A549 (cell line): ENCODE measurements at regions of chr9 and their contacts with region 1.

Region 1: DNA sequence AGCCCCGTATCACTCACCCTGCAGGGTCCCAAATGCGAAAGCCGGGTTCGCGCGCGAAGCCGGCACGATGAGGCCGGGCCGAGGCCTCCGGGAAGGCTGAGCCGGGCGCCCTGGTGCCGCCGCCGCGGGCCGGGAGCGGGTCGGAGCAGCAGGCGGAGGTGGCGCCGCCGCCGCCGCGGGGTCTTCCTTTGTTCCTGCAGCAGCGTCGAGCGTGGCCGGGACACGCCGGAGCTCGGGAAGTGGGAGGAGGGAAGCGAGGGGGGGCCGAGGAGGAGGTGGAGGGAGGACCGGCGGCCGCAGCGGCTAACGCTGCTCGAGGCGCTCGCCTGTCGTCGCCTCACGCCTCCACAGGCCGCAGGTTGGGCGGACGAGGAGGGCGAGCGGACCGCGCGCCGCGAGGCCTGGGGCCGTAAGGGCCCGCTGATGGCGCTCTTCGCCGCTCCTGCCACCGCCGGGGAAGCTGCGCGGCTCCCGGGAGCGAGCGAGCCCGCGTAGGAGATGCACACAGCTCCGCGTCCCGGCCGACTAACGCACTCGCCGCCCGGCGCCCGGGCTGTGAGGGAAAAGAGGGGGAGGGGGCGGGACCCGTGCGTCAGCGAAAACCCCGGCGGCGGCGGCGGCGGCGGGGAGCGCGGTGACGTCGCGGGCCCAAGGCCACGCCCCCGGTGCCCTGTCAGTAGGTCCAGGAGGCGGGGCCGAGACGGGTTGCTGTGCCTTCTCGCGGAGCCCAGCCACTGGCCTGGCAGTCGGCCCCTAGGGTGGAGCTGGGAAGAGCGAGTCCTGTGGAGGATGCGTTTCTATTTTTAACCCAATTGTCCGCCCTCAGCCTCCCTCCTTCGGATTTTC is at the start of gene ZFAND5:
- DNase-seq: peak; percentile 94 to 98
- ATAC-seq: peak; percentile 82 to 89
- H3K4me3 ChIP-seq: peak within 1 kb of the TSS; percentile 91
- H3K27ac ChIP-seq: peak within 1 kb of the TSS; percentile 99
- H3K4me1 ChIP-seq: peaks cover 26% of the 10 kb centered on the region
- CTCF ChIP-seq: peak; percentile 21; the same call in 1 of the 3 replicates
- EP300 ChIP-seq: peak in 1 of 2 experiments; percentile 38; a peak in 2 of 5 replicates
- POLR2A ChIP-seq: peak; percentile 95
- RAD21 ChIP-seq: peak; percentile 26 to 68; a peak in 4 of 5 replicates
- polyA plus RNA-seq, gene ZFAND5: 234 and 315 TPM in 2 replicates

Region 2: GRCh38 chr9:72315510-72316311 is 49.2 kb before region 1 on chr9:
- CTCF ChIA-PET with region 1: interaction called, 4 read pairs
- POLR2A ChIA-PET with region 1: interaction called, 48 read pairs
- DNase-seq: peak; percentile 40 to 91
- ATAC-seq: peak; percentile 87 to 91
- H3K4me3 ChIP-seq: peak overlapping the region; percentile 22; the same call in 2 of the 3 replicates
- H3K27ac ChIP-seq: peak overlapping the region; percentile 87 to 90
- H3K4me1 ChIP-seq: peaks cover 51% of the 10 kb centered on the region
- CTCF ChIP-seq: no peak
- EP300 ChIP-seq: peak; percentile 34 to 61; a peak in 3 of 5 replicates
- POLR2A ChIP-seq: no peak
- RAD21 ChIP-seq: no peak; a peak in 1 of 5 replicates

Region 3: DNA sequence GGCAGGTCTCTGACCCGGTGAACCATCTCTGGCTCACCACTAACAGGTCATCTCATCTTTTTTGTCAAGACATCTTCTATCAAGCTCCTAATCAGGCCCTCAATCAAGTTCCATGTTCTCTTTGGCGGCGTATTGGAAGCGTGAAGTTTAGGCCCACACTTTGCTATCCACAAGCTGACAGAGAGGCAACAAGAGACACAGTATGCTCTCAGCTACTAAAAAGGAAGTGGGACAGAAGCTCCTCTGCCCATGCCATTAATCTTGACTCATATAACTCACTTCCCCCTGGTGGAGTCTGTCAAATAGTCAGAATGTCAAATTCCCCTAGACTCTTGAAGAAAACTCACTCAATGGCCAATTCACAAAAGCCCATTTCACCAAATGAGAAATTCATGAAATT is 79.0 kb after region 1 on chr9:
- CTCF ChIA-PET with region 1: interaction called, 6 read pairs
- POLR2A ChIA-PET with region 1: interaction called, 34 read pairs
- DNase-seq: peak; percentile 38 to 58
- ATAC-seq: peak; percentile 43 to 57; a peak in 3 of 6 replicates
- H3K4me3 ChIP-seq: no peak overlapping the region
- H3K27ac ChIP-seq: peak overlapping the region; percentile 87 to 91
- H3K4me1 ChIP-seq: peaks cover 53% of the 10 kb centered on the region
- CTCF ChIP-seq: no peak
- EP300 ChIP-seq: no peak
- POLR2A ChIP-seq: no peak
- RAD21 ChIP-seq: peak in 1 of 2 experiments; percentile 12; a peak in 1 of 5 replicates

Region 4: DNA sequence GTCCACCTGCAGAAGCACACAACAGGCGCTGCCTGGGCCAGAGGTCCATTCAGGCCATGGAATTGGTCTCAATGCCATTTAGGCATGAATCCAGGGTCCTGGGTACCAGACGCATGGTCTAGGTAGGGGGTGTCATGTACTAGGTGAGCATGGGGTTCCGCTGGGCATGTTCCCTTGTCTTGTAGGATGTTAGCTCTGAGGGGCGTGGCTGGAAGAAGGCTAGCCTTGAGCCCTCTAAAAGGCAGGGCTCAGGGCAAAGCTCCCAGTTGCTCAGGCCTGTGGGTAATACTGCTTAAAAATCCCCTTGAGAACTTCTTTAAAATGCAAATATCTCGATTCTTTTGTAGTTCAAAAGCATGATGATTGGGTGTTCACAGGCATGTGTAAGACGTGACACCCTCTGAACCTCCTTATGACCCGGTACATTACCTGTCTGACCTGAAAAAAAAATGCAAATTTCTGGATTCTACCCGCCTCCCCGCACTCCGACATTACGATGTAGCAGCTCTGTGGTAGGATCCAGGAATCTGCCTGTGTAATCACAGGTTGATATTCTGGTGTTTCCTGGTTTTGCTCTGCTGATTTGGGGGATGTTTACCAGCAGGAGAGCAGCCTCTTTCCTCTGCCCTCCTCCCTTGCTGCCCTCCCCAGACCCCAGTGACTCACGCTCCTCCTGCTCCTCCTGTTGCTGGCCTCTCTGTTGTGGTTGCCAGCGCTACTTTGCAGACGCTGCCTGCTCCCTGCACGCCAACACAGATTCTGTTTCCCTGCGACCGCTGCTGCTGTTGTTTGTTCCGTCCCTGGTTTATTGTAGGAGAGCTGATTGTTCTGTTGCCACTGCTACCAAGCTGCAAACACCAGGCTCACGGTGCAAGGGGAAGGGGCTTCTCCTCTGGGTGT is 162.2 kb after region 1 on chr9:
- CTCF ChIA-PET with region 1: interaction called, 7 read pairs
- POLR2A ChIA-PET with region 1: interaction called, 74 read pairs
- DNase-seq: peak; percentile 75 to 88
- ATAC-seq: peak; percentile 94
- H3K4me3 ChIP-seq: peak overlapping the region; percentile 24
- H3K27ac ChIP-seq: peak overlapping the region; percentile 85
- H3K4me1 ChIP-seq: peaks cover 48% of the 10 kb centered on the region
- CTCF ChIP-seq: no peak
- EP300 ChIP-seq: no peak
- POLR2A ChIP-seq: peak; percentile 22; the same call in 1 of the 2 replicates
- RAD21 ChIP-seq: peak; percentile 28 to 43; a peak in 1 of 5 replicates

Region 5: GRCh38 chr9:72586388-72587130 is 221.7 kb after region 1 on chr9:
- CTCF ChIA-PET with region 1: interaction called, 15 read pairs
- POLR2A ChIA-PET with region 1: interaction called, 65 read pairs
- DNase-seq: peak; percentile 51 to 84
- ATAC-seq: peak; percentile 86 to 88
- H3K4me3 ChIP-seq: no peak overlapping the region
- H3K27ac ChIP-seq: peak overlapping the region; percentile 72 to 83
- H3K4me1 ChIP-seq: peaks cover 47% of the 10 kb centered on the region
- CTCF ChIP-seq: peak; percentile 43
- EP300 ChIP-seq: peak; percentile 77 to 82; a peak in 3 of 5 replicates
- POLR2A ChIP-seq: no peak
- RAD21 ChIP-seq: peak; percentile 51 to 78